Heart right ventricle (tissue), 16 donors: ENCODE measurements at regions of chr10 and their contacts with region 1.

Region 1: GRCh38 chr10:104350127-104350635 is 3.5 kb upstream of the CFAP58 start:
- DNase-seq: peak in 1 of 2 donors; percentile 48
- ATAC-seq: peak; percentile 56 to 84 (median 74)
- H3K4me3 ChIP-seq: peak overlapping the region in 6 of 10 donors; percentile 9 to 40 (median 30)
- H3K27ac ChIP-seq: peak overlapping the region; percentile 1 to 90 (median 58)
- H3K4me1 ChIP-seq: peaks cover 0 to 76% (median 20%) of the 10 kb centered on the region in 9 donors
- H3K27me3 ChIP-seq: no peaks in the 10 kb centered on the region
- CTCF ChIP-seq: peak; percentile 53 to 86 (median 74)

Region 2: GRCh38 chr10:104291439-104291951 is 58.7 kb before region 1 on chr10:
- intact Hi-C with region 1: loop called (anchors 1 to 5 kb)
- DNase-seq: peak; percentile 89 to 90
- ATAC-seq: peak; percentile 95 to 97 (median 96)
- H3K4me3 ChIP-seq: peak overlapping the region in 1 of 10 donors; percentile 6
- H3K27ac ChIP-seq: no peak overlapping the region
- H3K4me1 ChIP-seq: peaks cover 0 to 28% (median 15%) of the 10 kb centered on the region in 9 donors
- H3K27me3 ChIP-seq: peaks cover 0 to 6% (median 0%) of the 10 kb centered on the region in 7 donors
- CTCF ChIP-seq: peak; percentile 100

Region 3: GRCh38 chr10:104308439-104308903 is 41.7 kb before region 1 on chr10:
- intact Hi-C with region 1: loop called in 5 of 10 experiments (anchors 1 to 5 kb)
- DNase-seq: no peak
- ATAC-seq: no peak
- H3K4me3 ChIP-seq: no peak overlapping the region
- H3K27ac ChIP-seq: peak overlapping the region in 8 of 10 donors; percentile 8 to 95 (median 86)
- H3K4me1 ChIP-seq: peaks cover 25 to 100% (median 75%) of the 10 kb centered on the region in 9 donors
- H3K27me3 ChIP-seq: no peaks in the 10 kb centered on the region
- CTCF ChIP-seq: no peak